ENCODE measurements at regions of chr5 and their contacts with region 1.

Region 1: GRCh38 chr5:5658226-5658625 is 235.7 kb downstream of the ICE1 start:
- DNase-seq: peak; percentile 79 to 80
- ATAC-seq: peak; percentile 89
- H3K4me3 ChIP-seq: peak overlapping the region; percentile 52 to 97
- H3K27ac ChIP-seq: peak overlapping the region in 1 of 2 donors; percentile 86
- H3K4me1 ChIP-seq: no peaks in the 10 kb centered on the region
- H3K27me3 ChIP-seq: no peaks in the 10 kb centered on the region

Region 2: GRCh38 chr5:5572010-5572865 is 86.0 kb before region 1 on chr5:
- intact Hi-C with region 1: loop called in 1 of 2 experiments (anchors 5 kb)
- DNase-seq: peak; percentile 84 to 94
- ATAC-seq: peak; percentile 89
- H3K4me3 ChIP-seq: no peak overlapping the region
- H3K27ac ChIP-seq: peak overlapping the region; percentile 57 to 82
- H3K4me1 ChIP-seq: peaks cover 2 to 3% of the 10 kb centered on the region in 2 donors
- H3K27me3 ChIP-seq: no peaks in the 10 kb centered on the region

Region 3: DNA sequence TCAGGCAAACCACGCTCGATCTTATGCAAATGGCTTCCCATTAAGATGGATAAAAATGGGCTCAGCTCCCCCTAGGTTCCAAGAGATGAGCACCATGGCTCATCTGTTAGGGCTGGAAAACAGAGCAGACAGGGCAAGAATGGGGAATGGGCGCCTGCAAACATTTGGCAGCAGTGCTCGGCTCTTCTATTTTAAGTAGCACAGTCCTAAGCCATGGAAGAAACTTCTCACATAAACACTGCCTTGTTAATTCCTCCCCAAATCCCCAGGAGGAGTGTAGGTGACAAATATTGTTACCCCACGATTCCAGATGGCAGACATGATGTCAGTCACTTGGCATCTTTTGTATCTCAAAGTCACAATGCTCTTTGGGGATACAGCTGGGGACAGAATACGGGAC is 14.0 kb before region 1 on chr5:
- intact Hi-C with region 1: no loop called
- DNase-seq: no peak
- ATAC-seq: peak; percentile 36
- H3K4me3 ChIP-seq: no peak overlapping the region
- H3K27ac ChIP-seq: no peak overlapping the region
- H3K4me1 ChIP-seq: peaks cover 0 to 15% of the 10 kb centered on the region in 2 donors
- H3K27me3 ChIP-seq: no peaks in the 10 kb centered on the region

Measured in aorta (tissue), 5 donors.